Ovary (tissue), 10 donors: ENCODE measurements at regions of chr9 and their contacts with region 1.

Region 1: DNA sequence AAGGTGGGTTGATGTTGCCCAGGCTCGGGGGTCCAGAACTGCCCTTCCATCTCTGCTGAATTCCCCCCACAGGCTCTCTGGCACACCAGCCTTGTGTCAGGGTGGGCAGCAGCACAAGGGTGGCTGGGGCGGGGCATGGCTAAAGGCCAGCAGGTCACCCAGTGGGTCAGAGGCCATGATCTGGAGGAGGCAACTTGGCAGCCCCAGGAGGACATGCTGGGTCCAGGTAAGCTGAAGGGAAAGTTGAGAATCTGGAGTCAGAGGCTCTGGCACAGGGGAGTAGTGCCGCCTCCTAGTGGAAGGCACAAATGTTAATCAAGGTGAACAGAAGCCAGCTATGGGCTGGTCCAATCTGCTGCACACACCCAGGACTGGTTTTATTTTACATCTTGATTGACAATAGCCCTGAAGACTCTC is 6.2 kb downstream of the TMEM8B start:
- DNase-seq: no peak
- H3K4me3 ChIP-seq: no peak overlapping the region
- H3K27ac ChIP-seq: no peak overlapping the region
- H3K4me1 ChIP-seq: peaks cover 8% of the 10 kb centered on the region
- H3K27me3 ChIP-seq: no peaks in the 10 kb centered on the region
- CTCF ChIP-seq: no peak
- EP300 ChIP-seq: no peak
- POLR2A ChIP-seq: no peak

Region 2: DNA sequence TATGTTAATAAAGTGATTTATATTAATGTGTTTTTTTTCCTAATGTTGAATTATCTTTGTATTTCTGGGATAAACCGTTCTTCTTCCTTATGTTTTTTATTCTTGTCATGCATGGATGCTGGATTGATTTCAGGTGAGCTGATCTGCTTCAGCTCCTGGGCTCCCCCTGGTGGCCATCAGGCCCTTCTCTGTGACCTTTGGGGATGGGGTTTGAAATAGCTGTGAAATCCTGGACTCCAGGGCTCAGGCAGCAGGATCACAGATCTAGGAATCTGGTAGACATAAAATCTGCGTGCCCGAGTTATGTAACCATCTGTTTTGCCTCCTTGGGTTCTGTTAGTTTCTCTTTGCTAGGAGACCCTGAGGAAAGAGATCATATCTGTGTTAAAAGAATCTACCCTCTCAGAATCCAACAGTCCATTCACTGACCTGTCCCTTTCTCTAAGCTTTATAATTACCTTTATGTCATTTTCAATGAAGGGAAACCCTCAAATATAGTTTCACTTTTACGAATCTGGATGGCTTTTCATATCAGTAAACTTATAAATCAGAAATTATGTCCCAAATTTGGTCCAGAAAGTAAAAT is 47.1 kb after region 1 on chr9:
- intact Hi-C with region 1: loop called in 1 of 4 experiments (anchors 10 kb)
- DNase-seq: peak; percentile 79 to 89 (median 87)
- H3K4me3 ChIP-seq: no peak overlapping the region
- H3K27ac ChIP-seq: no peak overlapping the region
- H3K4me1 ChIP-seq: no peaks in the 10 kb centered on the region
- H3K27me3 ChIP-seq: no peaks in the 10 kb centered on the region
- CTCF ChIP-seq: peak; percentile 82 to 91 (median 85)
- EP300 ChIP-seq: no peak
- POLR2A ChIP-seq: no peak